Activated CD8-positive, alpha-beta T cell treated with anti-CD3 and anti-CD28 coated beads for 36 hours (primary cell): ENCODE measurements at regions of chr16 and their contacts with region 1.

Region 1: GRCh38 chr16:78770353-78771091 is 671.1 kb downstream of the WWOX start:
- DNase-seq: peak; percentile 83
- ATAC-seq: peak; percentile 32
- H3K4me3 Mint-ChIP-seq: no peak overlapping the region
- H3K27ac Mint-ChIP-seq: peak overlapping the region; percentile 34
- H3K4me1 Mint-ChIP-seq: peaks cover 37% of the 10 kb centered on the region
- H3K27me3 Mint-ChIP-seq: no peaks in the 10 kb centered on the region
- CTCF ChIP-seq: peak; percentile 93

Region 2: GRCh38 chr16:78503602-78504001 is 266.9 kb before region 1 on chr16:
- CTCF ChIA-PET with region 1: interaction called, 9 read pairs
- POLR2A ChIA-PET with region 1: no interaction called
- intact Hi-C with region 1: loop called (anchors 5 kb)
- DNase-seq: peak; percentile 64
- ATAC-seq: no peak
- H3K4me3 Mint-ChIP-seq: no peak overlapping the region
- H3K27ac Mint-ChIP-seq: no peak overlapping the region
- H3K4me1 Mint-ChIP-seq: no peaks in the 10 kb centered on the region
- H3K27me3 Mint-ChIP-seq: no peaks in the 10 kb centered on the region
- CTCF ChIP-seq: peak; percentile 93

Region 3: GRCh38 chr16:78705694-78706093 is 64.8 kb before region 1 on chr16:
- CTCF ChIA-PET with region 1: interaction called, 19 read pairs
- POLR2A ChIA-PET with region 1: interaction called, 5 read pairs
- intact Hi-C with region 1: loop called (anchors 2 kb)
- DNase-seq: peak; percentile 16
- ATAC-seq: peak; percentile 87
- H3K4me3 Mint-ChIP-seq: no peak overlapping the region
- H3K27ac Mint-ChIP-seq: no peak overlapping the region
- H3K4me1 Mint-ChIP-seq: peaks cover 3% of the 10 kb centered on the region
- H3K27me3 Mint-ChIP-seq: no peaks in the 10 kb centered on the region
- CTCF ChIP-seq: peak; percentile 69

Region 4: GRCh38 chr16:78892951-78893733 is 122.6 kb after region 1 on chr16:
- CTCF ChIA-PET with region 1: no interaction called
- POLR2A ChIA-PET with region 1: no interaction called
- intact Hi-C with region 1: loop called (anchors 10 kb)
- DNase-seq: peak; percentile 37
- ATAC-seq: peak; percentile 73
- H3K4me3 Mint-ChIP-seq: no peak overlapping the region
- H3K27ac Mint-ChIP-seq: peak overlapping the region; percentile 73
- H3K4me1 Mint-ChIP-seq: peaks cover 34% of the 10 kb centered on the region
- H3K27me3 Mint-ChIP-seq: no peaks in the 10 kb centered on the region
- CTCF ChIP-seq: no peak

Region 5: DNA sequence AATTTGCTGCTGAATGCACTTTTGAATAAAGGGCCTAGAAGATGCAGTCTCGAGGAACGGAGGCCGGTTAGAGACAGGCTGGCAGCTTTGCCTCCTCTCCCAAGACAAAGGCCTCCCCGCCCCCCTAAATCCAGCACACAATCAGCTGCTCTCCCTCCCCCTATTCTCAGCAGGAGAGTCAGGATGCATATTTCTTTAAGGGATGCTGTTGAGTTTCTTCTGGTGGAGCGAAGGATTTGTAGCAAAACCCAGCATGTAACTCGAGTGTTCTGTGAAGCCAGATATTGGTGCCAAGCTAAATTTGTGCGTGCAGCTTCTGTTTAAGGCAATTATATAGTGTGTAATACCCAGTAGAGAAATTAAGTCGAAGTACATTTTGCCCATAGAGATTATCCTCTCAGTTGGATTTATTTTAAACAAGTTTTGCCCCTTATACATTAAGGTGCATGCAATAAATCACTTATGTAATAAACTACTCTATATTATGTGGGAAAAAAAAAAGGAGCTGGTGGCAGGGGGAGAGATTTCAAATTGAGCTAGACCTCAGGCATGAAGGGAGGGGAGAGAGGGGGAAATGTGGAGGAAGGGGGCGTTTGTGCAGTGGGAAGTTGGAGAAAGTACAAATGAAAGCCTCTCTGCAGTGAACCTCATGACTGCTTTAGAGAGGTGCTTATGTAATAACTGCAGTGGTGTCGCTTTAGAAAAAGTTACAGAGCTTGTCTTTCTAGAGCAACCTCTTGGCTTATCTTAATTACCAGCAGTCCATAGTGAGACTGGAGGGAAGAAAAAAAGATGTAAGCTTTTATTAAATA is 230.8 kb after region 1 on chr16:
- CTCF ChIA-PET with region 1: no interaction called
- POLR2A ChIA-PET with region 1: no interaction called
- intact Hi-C with region 1: no loop called
- DNase-seq: no peak
- ATAC-seq: no peak
- H3K4me3 Mint-ChIP-seq: no peak overlapping the region
- H3K27ac Mint-ChIP-seq: no peak overlapping the region
- H3K4me1 Mint-ChIP-seq: no peaks in the 10 kb centered on the region
- H3K27me3 Mint-ChIP-seq: no peaks in the 10 kb centered on the region
- CTCF ChIP-seq: no peak